CD4-positive, alpha-beta memory T cell (primary cell): ENCODE measurements at regions of chr1 and their contacts with region 1.

Region 1: GRCh38 chr1:160777486-160778089 is 18.4 kb upstream of the LY9 start:
- DNase-seq: peak; percentile 69 to 75 (median 71)
- H3K4me3 ChIP-seq: no peak overlapping the region
- H3K4me3 Mint-ChIP-seq: no peak overlapping the region
- H3K27ac ChIP-seq: no peak overlapping the region
- H3K27ac Mint-ChIP-seq: peak overlapping the region in 3 of 7 donors; percentile 47 to 81 (median 58)
- H3K4me1 ChIP-seq: peaks cover 22% of the 10 kb centered on the region
- H3K4me1 Mint-ChIP-seq: peaks cover 17 to 25% (median 21%) of the 10 kb centered on the region in 4 donors
- H3K27me3 ChIP-seq: no peaks in the 10 kb centered on the region
- H3K27me3 Mint-ChIP-seq: peaks cover 0 to 2% of the 10 kb centered on the region in 2 donors

Region 2: DNA sequence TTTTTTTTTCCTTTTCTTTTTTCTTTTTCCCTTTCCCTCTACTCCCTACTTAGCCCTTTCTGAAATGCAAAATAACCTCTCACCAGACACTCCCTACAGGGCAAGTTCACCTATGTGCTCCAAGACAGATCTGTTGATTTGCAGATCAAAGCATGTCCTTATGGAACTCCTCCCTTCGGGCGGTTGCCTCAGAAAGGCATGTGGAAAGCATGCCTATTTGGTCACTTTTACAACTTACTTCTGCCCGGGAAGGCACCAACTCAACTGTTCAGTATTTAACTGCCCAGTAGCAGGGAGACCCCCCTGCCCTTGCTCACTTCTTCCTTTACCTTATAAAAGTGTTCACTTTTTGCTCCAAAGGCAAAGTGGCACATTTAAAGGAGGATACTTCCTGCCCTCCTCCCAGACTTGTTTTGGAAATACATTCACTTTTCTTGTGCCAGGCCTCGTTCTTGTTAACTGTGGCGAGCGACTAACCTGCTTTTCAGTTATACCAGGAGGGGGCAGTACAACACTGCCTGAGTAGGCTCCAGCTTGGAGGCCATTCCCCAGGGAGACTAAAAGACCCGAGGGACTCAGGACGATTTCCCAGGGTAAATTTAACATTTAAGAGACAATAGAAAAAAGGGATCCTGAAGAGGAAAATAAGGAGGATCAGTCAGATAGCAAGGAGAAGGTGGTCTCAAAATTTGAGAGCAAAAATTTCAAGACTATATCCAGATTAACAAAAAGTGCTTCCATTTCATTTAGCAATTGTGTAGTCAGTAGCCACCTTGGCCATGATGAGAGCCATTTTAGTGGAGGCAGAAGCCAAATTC is 50.9 kb before region 1 on chr1:
- CTCF ChIA-PET with region 1: interaction called, 22 read pairs
- POLR2A ChIA-PET with region 1: no interaction called
- intact Hi-C with region 1: no loop called
- DNase-seq: peak; percentile 67 to 76 (median 74)
- H3K4me3 ChIP-seq: no peak overlapping the region
- H3K4me3 Mint-ChIP-seq: no peak overlapping the region
- H3K27ac ChIP-seq: no peak overlapping the region
- H3K27ac Mint-ChIP-seq: no peak overlapping the region
- H3K4me1 ChIP-seq: peaks cover 24% of the 10 kb centered on the region
- H3K4me1 Mint-ChIP-seq: peaks cover 11 to 20% (median 15%) of the 10 kb centered on the region in 4 donors
- H3K27me3 ChIP-seq: no peaks in the 10 kb centered on the region
- H3K27me3 Mint-ChIP-seq: no peaks in the 10 kb centered on the region

Region 3: GRCh38 chr1:160806109-160806665 is 28.6 kb after region 1 on chr1:
- CTCF ChIA-PET with region 1: interaction called, 16 read pairs
- POLR2A ChIA-PET with region 1: interaction called, 7 read pairs
- intact Hi-C with region 1: loop called (anchors 1 kb)
- DNase-seq: peak in 1 of 5 donors; percentile 27
- H3K4me3 ChIP-seq: no peak overlapping the region
- H3K4me3 Mint-ChIP-seq: peak overlapping the region in 7 of 8 donors; percentile 14 to 71 (median 55)
- H3K27ac ChIP-seq: no peak overlapping the region
- H3K27ac Mint-ChIP-seq: peak overlapping the region; percentile 18 to 81 (median 65)
- H3K4me1 ChIP-seq: peaks cover 86% of the 10 kb centered on the region
- H3K4me1 Mint-ChIP-seq: peaks cover 56 to 90% (median 73%) of the 10 kb centered on the region in 4 donors
- H3K27me3 ChIP-seq: no peaks in the 10 kb centered on the region
- H3K27me3 Mint-ChIP-seq: no peaks in the 10 kb centered on the region

Region 4: DNA sequence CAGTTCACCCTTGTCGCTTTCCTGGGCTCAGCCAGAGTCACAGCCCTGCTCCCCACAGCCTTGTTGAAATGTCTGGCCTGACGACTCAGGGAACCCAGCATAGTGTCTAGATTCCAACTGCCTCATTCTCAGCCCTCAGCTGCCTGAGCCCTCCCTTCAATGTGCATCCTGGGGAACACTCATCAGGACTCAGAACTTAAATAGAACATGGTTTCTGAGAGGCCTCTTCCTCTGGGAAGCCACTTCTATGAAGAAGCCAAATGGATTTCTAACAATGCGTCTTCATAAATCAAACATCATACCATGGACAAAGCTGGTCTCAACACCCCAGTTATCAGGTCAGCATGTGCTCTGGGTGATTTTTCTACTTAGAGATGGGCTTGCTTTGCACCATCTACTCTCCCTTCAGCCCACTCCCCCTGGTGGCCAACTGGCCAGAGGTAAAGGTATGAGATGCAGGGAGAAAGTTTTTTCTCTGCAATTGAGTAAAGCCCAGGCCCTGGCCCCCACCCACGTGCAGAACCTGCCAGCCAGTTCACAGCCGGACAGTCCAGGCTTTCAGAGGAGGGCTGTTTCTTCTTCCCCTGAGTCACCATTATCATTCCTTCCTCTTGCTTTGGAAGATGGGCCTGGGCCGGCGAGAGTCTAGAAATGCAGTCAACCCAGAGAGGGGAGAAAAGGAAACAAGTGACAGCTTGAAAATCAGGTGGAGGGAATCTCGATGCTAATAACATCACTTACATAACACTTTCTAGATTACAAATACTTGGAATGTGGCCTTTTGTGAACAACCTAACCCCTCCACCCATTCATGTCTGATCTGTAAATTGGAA is 52.9 kb after region 1 on chr1:
- CTCF ChIA-PET with region 1: interaction called, 138 read pairs
- POLR2A ChIA-PET with region 1: interaction called, 6 read pairs
- intact Hi-C with region 1: loop called (anchors 1 kb)
- DNase-seq: peak; percentile 62 to 75 (median 70)
- H3K4me3 ChIP-seq: no peak overlapping the region
- H3K4me3 Mint-ChIP-seq: no peak overlapping the region
- H3K27ac ChIP-seq: no peak overlapping the region
- H3K27ac Mint-ChIP-seq: peak overlapping the region in 6 of 7 donors; percentile 74 to 86 (median 82)
- H3K4me1 ChIP-seq: peaks cover 6% of the 10 kb centered on the region
- H3K4me1 Mint-ChIP-seq: peaks cover 13 to 35% (median 24%) of the 10 kb centered on the region in 4 donors
- H3K27me3 ChIP-seq: no peaks in the 10 kb centered on the region
- H3K27me3 Mint-ChIP-seq: no peaks in the 10 kb centered on the region

Region 5: GRCh38 chr1:160951443-160952128 is 174.0 kb after region 1 on chr1:
- CTCF ChIA-PET with region 1: interaction called, 108 read pairs
- POLR2A ChIA-PET with region 1: no interaction called
- intact Hi-C with region 1: loop called (anchors 1 kb)
- DNase-seq: peak; percentile 52 to 70 (median 65)
- H3K4me3 ChIP-seq: no peak overlapping the region
- H3K4me3 Mint-ChIP-seq: no peak overlapping the region
- H3K27ac ChIP-seq: no peak overlapping the region
- H3K27ac Mint-ChIP-seq: no peak overlapping the region
- H3K4me1 ChIP-seq: no peaks in the 10 kb centered on the region
- H3K4me1 Mint-ChIP-seq: peaks cover 6 to 13% (median 7%) of the 10 kb centered on the region in 4 donors
- H3K27me3 ChIP-seq: no peaks in the 10 kb centered on the region
- H3K27me3 Mint-ChIP-seq: no peaks in the 10 kb centered on the region

Region 6: GRCh38 chr1:161082991-161083742 is 305.6 kb after region 1 on chr1:
- CTCF ChIA-PET with region 1: no interaction called
- POLR2A ChIA-PET with region 1: no interaction called
- intact Hi-C with region 1: no loop called
- DNase-seq: no peak
- H3K4me3 ChIP-seq: no peak overlapping the region
- H3K4me3 Mint-ChIP-seq: no peak overlapping the region
- H3K27ac ChIP-seq: no peak overlapping the region
- H3K27ac Mint-ChIP-seq: peak overlapping the region in 1 of 7 donors; percentile 19
- H3K4me1 ChIP-seq: no peaks in the 10 kb centered on the region
- H3K4me1 Mint-ChIP-seq: no peaks in the 10 kb centered on the region
- H3K27me3 ChIP-seq: no peaks in the 10 kb centered on the region
- H3K27me3 Mint-ChIP-seq: no peaks in the 10 kb centered on the region